ENCODE measurements at regions of chr12 and their contacts with region 1.

Region 1: GRCh38 chr12:112900299-112901145 is 6.2 kb upstream of the OAS1 start:
- DNase-seq: peak; percentile 60
- ATAC-seq: peak; percentile 67
- H3K4me3 Mint-ChIP-seq: no peak overlapping the region
- H3K27ac Mint-ChIP-seq: no peak overlapping the region
- H3K4me1 Mint-ChIP-seq: peaks cover 15% of the 10 kb centered on the region
- H3K27me3 Mint-ChIP-seq: no peaks in the 10 kb centered on the region
- CTCF ChIP-seq: peak; percentile 86

Region 2: GRCh38 chr12:113030875-113031525 is 130.5 kb after region 1 on chr12:
- CTCF ChIA-PET with region 1: interaction called, 12 read pairs
- POLR2A ChIA-PET with region 1: no interaction called
- intact Hi-C with region 1: loop called (anchors 5 kb)
- DNase-seq: peak; percentile 4
- ATAC-seq: peak; percentile 39
- H3K4me3 Mint-ChIP-seq: no peak overlapping the region
- H3K27ac Mint-ChIP-seq: no peak overlapping the region
- H3K4me1 Mint-ChIP-seq: peaks cover 2% of the 10 kb centered on the region
- H3K27me3 Mint-ChIP-seq: peaks cover 4% of the 10 kb centered on the region
- CTCF ChIP-seq: peak; percentile 62